Endothelial cell of umbilical vein (primary cell): ENCODE measurements at regions of chr3 and their contacts with region 1.

Region 1: GRCh38 chr3:136752422-136753325 is 496 bp upstream of the STAG1 start:
- DNase-seq: peak; percentile 99
- H3K4me3 ChIP-seq: peak overlapping the region; percentile 80 to 82 (median 82)
- H3K27ac ChIP-seq: peak overlapping the region; percentile 99
- H3K4me1 ChIP-seq: peaks cover 19% of the 10 kb centered on the region
- H3K27me3 ChIP-seq: no peaks in the 10 kb centered on the region
- CTCF ChIP-seq: peak in 1 of 2 donors; percentile 96
- POLR2A ChIP-seq: peak; percentile 84

Region 2: DNA sequence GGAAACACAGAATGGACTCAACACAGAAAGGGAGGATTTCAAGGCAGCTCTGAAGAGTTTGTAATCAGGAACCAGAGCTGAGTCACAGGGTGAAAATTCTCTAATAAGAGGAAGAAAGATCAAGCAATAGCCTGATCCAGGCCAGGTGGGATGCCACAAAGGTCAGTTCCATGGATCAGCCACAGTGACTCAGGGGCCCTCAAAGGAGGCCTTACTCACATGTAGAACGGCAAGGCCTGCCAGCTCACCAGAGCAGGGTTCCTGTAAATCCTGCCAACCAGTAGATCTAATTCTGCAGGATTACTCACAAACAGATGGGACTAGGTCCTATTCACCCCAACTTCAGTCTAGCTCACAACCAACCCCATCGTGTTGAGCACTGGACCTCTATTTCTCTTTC is 865.5 kb before region 1 on chr3:
- CTCF ChIA-PET with region 1: no interaction called
- POLR2A ChIA-PET with region 1: no interaction called
- dilution Hi-C with region 1: no loop called
- intact Hi-C with region 1: no loop called
- DNase-seq: no peak
- H3K4me3 ChIP-seq: no peak overlapping the region
- H3K27ac ChIP-seq: no peak overlapping the region
- H3K4me1 ChIP-seq: no peaks in the 10 kb centered on the region
- H3K27me3 ChIP-seq: no peaks in the 10 kb centered on the region
- CTCF ChIP-seq: no peak
- POLR2A ChIP-seq: no peak

Region 3: DNA sequence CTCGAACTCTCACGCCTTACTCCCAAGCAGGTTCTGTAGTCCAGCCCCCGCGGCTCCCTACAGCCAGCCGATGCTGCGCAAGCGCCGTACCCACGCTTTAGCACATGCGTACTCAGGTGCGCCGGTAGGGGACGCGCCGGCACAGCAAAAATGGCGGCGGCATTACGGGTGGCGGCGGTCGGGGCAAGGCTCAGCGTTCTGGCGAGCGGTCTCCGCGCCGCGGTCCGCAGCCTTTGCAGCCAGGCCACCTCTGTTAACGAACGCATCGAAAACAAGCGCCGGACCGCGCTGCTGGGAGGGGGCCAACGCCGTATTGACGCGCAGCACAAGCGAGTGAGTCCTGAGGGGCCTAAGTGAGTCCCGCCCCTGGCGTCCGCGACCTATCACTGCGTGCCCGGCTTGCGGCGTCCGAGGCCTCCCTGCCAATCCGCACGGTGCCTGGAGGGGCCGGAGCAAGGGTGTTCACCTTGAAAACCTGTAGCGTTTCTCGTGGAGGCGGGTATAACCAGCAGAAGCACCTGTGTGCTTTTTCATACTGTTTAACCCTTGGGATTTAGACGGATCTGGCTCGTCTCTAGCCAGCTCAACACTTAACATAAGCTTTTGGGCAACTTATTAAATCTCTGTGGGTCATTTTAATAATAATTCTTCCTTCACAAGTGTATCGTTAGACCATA is 502.3 kb before region 1 on chr3 and contains the start of gene PCCB:
- CTCF ChIA-PET with region 1: interaction called, 10 read pairs
- POLR2A ChIA-PET with region 1: no interaction called
- dilution Hi-C with region 1: no loop called
- intact Hi-C with region 1: loop called (anchors 1 kb)
- DNase-seq: peak; percentile 96
- H3K4me3 ChIP-seq: peak within 1 kb of the TSS; percentile 31 to 73 (median 60)
- H3K27ac ChIP-seq: peak within 1 kb of the TSS; percentile 66
- H3K4me1 ChIP-seq: peaks cover 8% of the 10 kb centered on the region
- H3K27me3 ChIP-seq: no peaks in the 10 kb centered on the region
- CTCF ChIP-seq: peak; percentile 60 to 79
- POLR2A ChIP-seq: peak; percentile 81
- total RNA-seq, gene PCCB: 28.6 and 35.4 TPM in 2 replicates

Region 4: DNA sequence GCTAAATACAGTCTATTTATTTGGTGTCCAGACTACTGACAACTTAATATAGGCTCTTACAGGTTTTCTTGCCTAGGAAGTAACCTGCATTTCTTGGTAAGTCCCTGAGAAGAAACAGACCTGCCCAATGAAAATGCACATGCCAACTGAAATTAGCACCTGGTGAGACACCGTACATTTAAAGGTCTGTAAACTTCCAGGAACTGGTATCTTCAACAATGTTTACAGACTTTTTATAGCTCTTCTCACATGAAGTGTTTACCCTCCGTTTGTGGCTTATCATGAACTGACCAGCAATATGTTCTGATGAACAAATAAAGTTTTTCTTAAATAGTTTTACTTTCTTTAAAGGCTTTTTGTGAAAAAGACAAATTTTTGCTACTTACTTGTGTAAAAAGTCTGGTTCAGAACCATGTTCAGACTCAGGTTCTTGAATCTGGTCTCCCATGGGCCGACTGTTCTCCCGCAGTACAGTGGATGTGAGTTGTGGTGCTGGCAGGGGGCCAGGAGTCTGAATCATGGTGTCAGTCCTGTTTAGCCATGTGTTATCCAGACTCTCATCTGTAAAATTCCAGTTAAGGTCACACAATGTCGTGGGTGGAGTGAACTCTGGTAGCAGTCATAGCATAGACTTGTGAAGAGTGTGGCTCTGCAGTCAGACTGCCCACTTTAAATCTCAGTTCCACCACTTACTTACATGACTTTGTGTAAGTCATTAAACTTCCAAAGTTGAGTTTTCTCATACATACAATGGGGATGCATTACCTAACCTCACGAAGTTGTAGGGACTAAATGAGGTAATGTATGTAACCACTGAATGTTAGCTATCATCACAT is 409.0 kb before region 1 on chr3:
- CTCF ChIA-PET with region 1: interaction called, 8 read pairs
- POLR2A ChIA-PET with region 1: no interaction called
- dilution Hi-C with region 1: no loop called
- intact Hi-C with region 1: loop called (anchors 5 kb)
- DNase-seq: peak; percentile 91
- H3K4me3 ChIP-seq: no peak overlapping the region
- H3K27ac ChIP-seq: no peak overlapping the region
- H3K4me1 ChIP-seq: peaks cover 8% of the 10 kb centered on the region
- H3K27me3 ChIP-seq: no peaks in the 10 kb centered on the region
- CTCF ChIP-seq: no peak
- POLR2A ChIP-seq: no peak

Region 5: GRCh38 chr3:136390574-136390973 is 362.1 kb before region 1 on chr3:
- CTCF ChIA-PET with region 1: interaction called, 253 read pairs
- POLR2A ChIA-PET with region 1: interaction called, 17 read pairs
- dilution Hi-C with region 1: no loop called
- intact Hi-C with region 1: loop called (anchors 1 kb)
- DNase-seq: peak; percentile 78
- H3K4me3 ChIP-seq: no peak overlapping the region
- H3K27ac ChIP-seq: no peak overlapping the region
- H3K4me1 ChIP-seq: peaks cover 11% of the 10 kb centered on the region
- H3K27me3 ChIP-seq: no peaks in the 10 kb centered on the region
- CTCF ChIP-seq: no peak
- POLR2A ChIP-seq: no peak

Region 6: DNA sequence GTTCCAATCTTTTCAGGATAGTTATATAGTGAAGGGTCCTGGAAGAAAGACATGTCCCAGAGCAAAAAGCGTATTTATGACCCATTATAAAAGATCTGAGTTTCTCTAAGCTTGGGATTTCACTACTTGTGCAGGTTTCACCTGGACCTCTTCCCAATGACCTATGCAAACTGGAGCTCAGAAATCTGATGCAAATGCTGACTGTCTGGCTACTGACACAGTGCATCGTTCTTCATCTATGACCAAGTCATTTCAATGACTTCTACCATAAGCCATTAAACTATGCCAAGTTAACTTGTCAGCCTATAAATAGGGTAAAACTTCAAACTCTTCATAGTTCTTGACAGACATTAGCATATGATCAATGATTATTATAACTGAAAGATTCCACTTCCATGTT is 11.6 kb before region 1 on chr3:
- CTCF ChIA-PET with region 1: interaction called, 23 read pairs
- POLR2A ChIA-PET with region 1: no interaction called
- dilution Hi-C with region 1: no loop called
- intact Hi-C with region 1: no loop called
- DNase-seq: no peak
- H3K4me3 ChIP-seq: no peak overlapping the region
- H3K27ac ChIP-seq: no peak overlapping the region
- H3K4me1 ChIP-seq: peaks cover 2% of the 10 kb centered on the region
- H3K27me3 ChIP-seq: no peaks in the 10 kb centered on the region
- CTCF ChIP-seq: no peak
- POLR2A ChIP-seq: no peak

Region 7: DNA sequence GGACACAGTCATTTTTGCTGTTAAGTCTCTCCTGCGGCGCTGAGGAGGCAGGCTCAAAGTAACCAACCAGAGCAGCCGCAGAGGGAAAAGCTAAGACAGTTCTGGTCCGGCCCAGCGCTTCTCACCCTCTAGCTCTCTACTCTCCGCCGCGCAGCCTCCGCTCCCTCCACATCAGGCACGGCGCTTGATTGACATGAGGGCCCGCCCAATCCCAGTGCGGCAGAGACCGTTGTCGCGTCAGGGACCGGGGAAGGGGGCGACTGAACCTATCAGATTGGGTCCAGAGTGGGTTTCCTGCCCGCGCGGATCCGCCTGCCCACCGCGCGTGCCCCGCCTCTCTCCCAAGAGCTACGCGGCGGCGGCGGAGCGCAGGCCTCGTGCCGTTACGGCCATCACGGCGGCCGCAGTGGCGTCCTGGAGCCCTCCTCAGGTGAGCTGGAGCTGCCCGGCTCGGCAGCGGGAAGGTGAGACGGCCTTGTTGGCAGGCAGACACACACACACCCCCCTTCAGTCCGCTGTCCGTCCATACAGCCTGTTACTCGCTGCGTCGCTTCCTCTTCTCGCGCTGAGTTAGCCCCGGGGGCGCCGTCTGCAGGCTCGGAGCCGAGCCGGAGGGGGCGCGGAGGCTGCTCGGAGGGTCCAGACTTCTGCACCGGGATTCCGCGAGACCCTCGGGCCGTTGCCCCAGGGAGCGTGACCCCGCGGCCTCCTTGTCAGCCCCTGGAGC is 109.4 kb after region 1 on chr3 and contains the start of gene NCK1:
- CTCF ChIA-PET with region 1: interaction called, 44 read pairs
- POLR2A ChIA-PET with region 1: interaction called, 16 read pairs
- dilution Hi-C with region 1: no loop called
- intact Hi-C with region 1: loop called (anchors 1 kb)
- DNase-seq: peak; percentile 99
- H3K4me3 ChIP-seq: peak within 1 kb of the TSS; percentile 81 to 96 (median 95)
- H3K27ac ChIP-seq: peak within 1 kb of the TSS; percentile 83
- H3K4me1 ChIP-seq: peaks cover 13% of the 10 kb centered on the region
- H3K27me3 ChIP-seq: no peaks in the 10 kb centered on the region
- CTCF ChIP-seq: peak in 1 of 2 donors; percentile 23
- POLR2A ChIP-seq: peak; percentile 91
- total RNA-seq, gene NCK1: 45.1 and 52.2 TPM in 2 replicates

Region 8: GRCh38 chr3:137946345-137946973 is 1193.8 kb after region 1 on chr3:
- CTCF ChIA-PET with region 1: no interaction called
- POLR2A ChIA-PET with region 1: no interaction called
- dilution Hi-C with region 1: no loop called
- intact Hi-C with region 1: loop called (anchors 5 kb)
- DNase-seq: peak; percentile 57
- H3K4me3 ChIP-seq: no peak overlapping the region
- H3K27ac ChIP-seq: no peak overlapping the region
- H3K4me1 ChIP-seq: no peaks in the 10 kb centered on the region
- H3K27me3 ChIP-seq: no peaks in the 10 kb centered on the region
- CTCF ChIP-seq: peak; percentile 62 to 67
- POLR2A ChIP-seq: no peak